ENCODE measurements at regions of chr6 and their contacts with region 1.

Region 1: GRCh38 chr6:336159-337019 is 44.1 kb downstream of the DUSP22 start:
- DNase-seq: peak; percentile 70
- CTCF ChIP-seq: no peak

Region 2: GRCh38 chr6:268394-268935 is 67.9 kb before region 1 on chr6:
- CTCF ChIA-PET with region 1: no interaction called
- POLR2A ChIA-PET with region 1: no interaction called
- DNase-seq: no peak
- CTCF ChIP-seq: no peak

Region 3: DNA sequence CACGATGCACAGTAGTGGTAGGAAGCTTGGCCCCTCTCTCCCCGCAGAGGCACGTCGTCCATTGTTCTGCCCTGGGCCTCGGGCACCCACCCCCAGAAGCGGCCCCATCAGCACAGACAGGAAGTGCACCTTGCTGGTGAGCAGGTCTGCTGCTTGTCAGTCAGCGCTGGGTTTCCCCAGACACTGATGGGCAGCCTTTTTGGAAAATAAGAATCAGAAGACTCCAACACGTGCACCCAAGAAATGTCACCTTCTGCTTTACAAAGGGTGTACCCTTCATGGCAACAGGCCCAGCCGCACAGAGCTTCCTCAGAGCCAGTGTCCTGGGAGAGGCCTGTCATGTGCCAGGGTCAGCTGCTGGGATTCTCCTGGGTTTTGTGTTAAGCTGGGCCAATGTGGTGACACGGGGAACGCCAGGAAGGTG is 20.5 kb after region 1 on chr6:
- CTCF ChIA-PET with region 1: interaction called, 76 read pairs
- POLR2A ChIA-PET with region 1: no interaction called
- DNase-seq: peak; percentile 90
- CTCF ChIP-seq: no peak

Region 4: GRCh38 chr6:650098-650497 is 313.7 kb after region 1 on chr6:
- CTCF ChIA-PET with region 1: no interaction called
- POLR2A ChIA-PET with region 1: no interaction called
- DNase-seq: no peak
- CTCF ChIP-seq: no peak